A673 (cell line): ENCODE measurements at regions of chr1 and their contacts with region 1.

Region 1: GRCh38 chr1:98048244-98048643 is 127.4 kb upstream of the DPYD start:
- DNase-seq: peak; percentile 95
- H3K4me3 ChIP-seq: peak overlapping the region; percentile 35
- H3K27ac ChIP-seq: no peak overlapping the region
- H3K4me1 ChIP-seq: peaks cover 49% of the 10 kb centered on the region
- H3K27me3 ChIP-seq: peaks cover 34% of the 10 kb centered on the region
- CTCF ChIP-seq: no peak

Region 2: GRCh38 chr1:97524211-97524610 is 524.0 kb before region 1 on chr1:
- CTCF ChIA-PET with region 1: interaction called, 6 read pairs
- POLR2A ChIA-PET with region 1: no interaction called
- intact Hi-C with region 1: loop called (anchors 10 kb)
- DNase-seq: no peak
- H3K4me3 ChIP-seq: no peak overlapping the region
- H3K27ac ChIP-seq: no peak overlapping the region
- H3K4me1 ChIP-seq: no peaks in the 10 kb centered on the region
- H3K27me3 ChIP-seq: no peaks in the 10 kb centered on the region
- CTCF ChIP-seq: no peak

Region 3: DNA sequence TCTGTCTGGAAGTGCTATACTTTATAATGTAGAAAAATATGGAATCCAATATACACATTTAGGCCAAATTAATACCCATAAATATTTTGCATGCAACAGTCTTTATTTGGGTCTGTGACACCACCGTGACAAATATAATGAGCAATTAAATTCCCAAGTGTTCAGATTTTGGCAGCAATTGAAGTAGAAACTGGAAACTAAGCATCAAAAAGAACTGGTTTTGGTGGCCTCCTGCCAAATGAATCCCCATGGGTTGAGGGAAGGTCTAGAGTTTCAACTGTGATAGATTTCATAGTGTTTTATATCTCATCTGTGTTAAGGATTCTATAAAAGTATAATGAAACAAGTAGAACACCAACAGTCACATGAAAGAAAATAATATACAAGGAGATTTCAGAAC is 215.8 kb before region 1 on chr1:
- CTCF ChIA-PET with region 1: interaction called, 3 read pairs
- POLR2A ChIA-PET with region 1: no interaction called
- intact Hi-C with region 1: loop called (anchors 5 kb)
- DNase-seq: peak; percentile 92
- H3K4me3 ChIP-seq: no peak overlapping the region
- H3K27ac ChIP-seq: no peak overlapping the region
- H3K4me1 ChIP-seq: peaks cover 58% of the 10 kb centered on the region
- H3K27me3 ChIP-seq: no peaks in the 10 kb centered on the region
- CTCF ChIP-seq: no peak

Region 4: GRCh38 chr1:97906567-97907241 is 141.5 kb before region 1 on chr1:
- CTCF ChIA-PET with region 1: no interaction called
- POLR2A ChIA-PET with region 1: no interaction called
- intact Hi-C with region 1: loop called (anchors 5 kb)
- DNase-seq: peak; percentile 93
- H3K4me3 ChIP-seq: peak overlapping the region; percentile 16
- H3K27ac ChIP-seq: peak overlapping the region; percentile 75
- H3K4me1 ChIP-seq: peaks cover 82% of the 10 kb centered on the region
- H3K27me3 ChIP-seq: no peaks in the 10 kb centered on the region
- CTCF ChIP-seq: no peak

Region 5: GRCh38 chr1:97920832-97921571 is 127.2 kb before region 1 on chr1 and contains the start of gene DPYD:
- CTCF ChIA-PET with region 1: no interaction called
- POLR2A ChIA-PET with region 1: no interaction called
- intact Hi-C with region 1: loop called (anchors 5 kb)
- DNase-seq: peak; percentile 96
- H3K4me3 ChIP-seq: peak within 1 kb of the TSS; percentile 84
- H3K27ac ChIP-seq: peak within 1 kb of the TSS; percentile 67
- H3K4me1 ChIP-seq: peaks cover 20% of the 10 kb centered on the region
- H3K27me3 ChIP-seq: no peaks in the 10 kb centered on the region
- CTCF ChIP-seq: no peak
- total RNA-seq, gene DPYD: 10.8 and 13.4 TPM in 2 replicates